ENCODE measurements at regions of chr10 and their contacts with region 1.

Region 1: DNA sequence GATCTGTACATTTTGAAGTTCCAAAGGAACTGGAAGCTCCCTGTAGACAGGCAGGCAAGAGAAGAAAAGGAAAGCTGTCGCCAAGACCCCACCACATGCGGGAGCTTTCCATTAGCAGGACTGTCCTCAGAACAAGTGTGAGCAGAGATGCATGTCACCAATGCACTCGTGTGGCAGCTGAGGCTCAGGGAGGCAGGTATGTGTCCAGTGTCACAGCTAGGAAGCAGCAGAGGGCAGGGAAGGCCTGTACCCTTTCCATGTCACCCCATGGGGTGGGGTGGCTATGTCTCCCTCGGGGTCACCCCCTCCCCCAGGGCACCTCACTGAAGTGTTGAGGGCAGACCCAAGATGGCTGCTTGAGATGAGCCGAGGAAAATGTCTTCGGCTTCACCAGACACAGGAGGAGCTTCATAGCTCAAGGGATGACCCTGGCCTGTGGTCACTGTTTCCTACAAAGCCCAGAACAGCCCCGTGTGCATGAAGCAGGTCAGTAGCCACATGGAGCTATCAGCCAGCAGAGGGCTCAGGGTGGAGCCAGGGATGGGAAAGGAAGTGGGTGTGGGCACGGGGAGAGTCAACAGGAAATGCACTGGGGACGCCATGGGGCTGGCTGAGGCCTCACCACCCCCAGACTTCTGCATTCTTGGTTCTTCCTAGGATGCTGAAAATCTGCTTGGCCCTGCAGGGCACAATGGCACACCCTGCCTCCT is 96.6 kb downstream of the FAM53B start:
- DNase-seq: peak; percentile 21 to 84 (median 64)
- ATAC-seq: peak; percentile 70 to 78
- H3K4me3 Mint-ChIP-seq: peak overlapping the region; percentile 69 to 84 (median 76)
- H3K27ac Mint-ChIP-seq: peak overlapping the region; percentile 84 to 99 (median 92)
- H3K4me1 Mint-ChIP-seq: peaks cover 36 to 99% (median 74%) of the 10 kb centered on the region in 4 donors
- H3K27me3 Mint-ChIP-seq: no peaks in the 10 kb centered on the region

Region 2: DNA sequence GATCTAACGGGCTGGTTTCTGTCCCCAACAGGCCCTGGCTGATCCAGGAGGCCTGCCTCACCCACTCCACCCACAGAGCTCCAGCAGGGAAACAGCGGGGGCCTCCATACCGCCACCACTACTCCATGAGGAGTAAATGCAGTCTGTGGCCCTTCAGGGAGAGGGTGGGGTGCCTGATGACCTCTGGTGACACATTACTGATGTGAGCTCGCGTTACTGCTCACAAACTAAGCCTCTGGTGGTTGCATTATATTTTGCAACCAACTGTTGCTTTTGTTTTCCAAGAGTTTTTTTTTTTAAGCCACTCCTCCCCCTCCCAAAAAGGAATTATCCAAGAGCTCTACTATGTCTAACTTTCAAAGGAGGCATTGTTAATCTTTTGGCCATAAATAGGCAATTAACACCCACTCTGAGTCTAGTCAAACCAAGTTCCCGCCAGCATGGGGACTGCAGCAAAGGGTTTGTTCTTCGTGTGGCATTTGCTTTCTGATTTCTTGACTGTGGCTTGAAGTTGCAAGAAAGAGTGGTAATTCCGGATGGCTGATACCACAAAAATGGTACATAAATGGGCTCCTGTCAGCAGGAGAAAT is 24.0 kb after region 1 on chr10:
- POLR2A ChIA-PET with region 1: interaction called, 14 read pairs
- DNase-seq: peak in 4 of 10 donors; percentile 16 to 61 (median 44)
- ATAC-seq: peak; percentile 58 to 69
- H3K4me3 Mint-ChIP-seq: peak overlapping the region; percentile 41 to 82 (median 74)
- H3K27ac Mint-ChIP-seq: peak overlapping the region; percentile 50 to 93 (median 86)
- H3K4me1 Mint-ChIP-seq: peaks cover 44 to 93% (median 75%) of the 10 kb centered on the region in 4 donors
- H3K27me3 Mint-ChIP-seq: no peaks in the 10 kb centered on the region

Region 3: DNA sequence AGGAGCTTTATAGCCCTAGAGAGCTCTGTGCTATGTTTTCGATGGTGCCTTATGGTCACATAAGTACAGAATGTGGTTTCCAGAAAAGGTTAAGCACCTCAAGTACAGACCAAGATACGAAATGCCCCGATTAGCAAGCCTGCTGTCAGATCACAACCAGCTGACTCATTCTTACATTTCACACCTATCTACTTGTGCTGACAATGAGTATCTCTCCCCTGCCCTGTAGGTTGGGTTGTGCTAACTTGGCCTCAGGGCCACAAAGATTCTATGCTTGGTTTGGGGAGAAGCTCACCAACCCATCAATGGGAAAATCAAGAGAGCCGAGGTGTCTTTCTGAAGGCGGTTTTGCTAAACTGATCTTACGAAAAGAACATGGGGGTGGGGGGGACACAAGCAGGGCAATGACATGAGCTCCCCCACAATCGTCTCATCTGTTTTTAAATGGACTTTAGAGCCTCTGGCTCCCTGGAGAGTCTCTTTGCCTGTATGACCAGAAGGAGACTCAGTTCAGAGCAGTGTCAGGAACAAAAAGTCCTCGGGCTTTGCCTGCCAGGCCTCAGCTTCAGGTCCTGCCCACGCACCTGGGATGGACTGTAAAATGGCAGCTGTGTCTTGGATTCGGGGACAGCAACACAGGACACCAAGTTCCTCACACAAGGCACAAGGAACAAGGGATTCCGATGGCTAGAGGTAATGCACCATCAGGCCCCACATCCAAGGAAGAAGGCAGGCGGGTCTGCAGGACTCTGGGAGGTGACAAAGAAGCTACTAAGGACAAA is 41.5 kb after region 1 on chr10:
- POLR2A ChIA-PET with region 1: interaction called, 11 read pairs
- DNase-seq: no peak
- ATAC-seq: peak in 1 of 2 donors; percentile 30
- H3K4me3 Mint-ChIP-seq: peak overlapping the region in 2 of 10 donors; percentile 46 to 82
- H3K27ac Mint-ChIP-seq: peak overlapping the region in 5 of 10 donors; percentile 33 to 97 (median 69)
- H3K4me1 Mint-ChIP-seq: peaks cover 30 to 87% (median 62%) of the 10 kb centered on the region in 4 donors
- H3K27me3 Mint-ChIP-seq: no peaks in the 10 kb centered on the region

Region 4: GRCh38 chr10:124719213-124719851 is 71.8 kb after region 1 on chr10:
- POLR2A ChIA-PET with region 1: interaction called, 56 read pairs
- DNase-seq: peak in 9 of 10 donors; percentile 47 to 85 (median 74)
- ATAC-seq: peak; percentile 54 to 61
- H3K4me3 Mint-ChIP-seq: peak overlapping the region; percentile 50 to 86 (median 74)
- H3K27ac Mint-ChIP-seq: peak overlapping the region; percentile 88 to 98 (median 96)
- H3K4me1 Mint-ChIP-seq: peaks cover 46 to 98% (median 86%) of the 10 kb centered on the region in 4 donors
- H3K27me3 Mint-ChIP-seq: no peaks in the 10 kb centered on the region

Measured in naive thymus-derived CD8-positive, alpha-beta T cell (primary cell).